Right lobe of liver (tissue), 6 donors: ENCODE measurements at regions of chr5 and their contacts with region 1.

Region 1: DNA sequence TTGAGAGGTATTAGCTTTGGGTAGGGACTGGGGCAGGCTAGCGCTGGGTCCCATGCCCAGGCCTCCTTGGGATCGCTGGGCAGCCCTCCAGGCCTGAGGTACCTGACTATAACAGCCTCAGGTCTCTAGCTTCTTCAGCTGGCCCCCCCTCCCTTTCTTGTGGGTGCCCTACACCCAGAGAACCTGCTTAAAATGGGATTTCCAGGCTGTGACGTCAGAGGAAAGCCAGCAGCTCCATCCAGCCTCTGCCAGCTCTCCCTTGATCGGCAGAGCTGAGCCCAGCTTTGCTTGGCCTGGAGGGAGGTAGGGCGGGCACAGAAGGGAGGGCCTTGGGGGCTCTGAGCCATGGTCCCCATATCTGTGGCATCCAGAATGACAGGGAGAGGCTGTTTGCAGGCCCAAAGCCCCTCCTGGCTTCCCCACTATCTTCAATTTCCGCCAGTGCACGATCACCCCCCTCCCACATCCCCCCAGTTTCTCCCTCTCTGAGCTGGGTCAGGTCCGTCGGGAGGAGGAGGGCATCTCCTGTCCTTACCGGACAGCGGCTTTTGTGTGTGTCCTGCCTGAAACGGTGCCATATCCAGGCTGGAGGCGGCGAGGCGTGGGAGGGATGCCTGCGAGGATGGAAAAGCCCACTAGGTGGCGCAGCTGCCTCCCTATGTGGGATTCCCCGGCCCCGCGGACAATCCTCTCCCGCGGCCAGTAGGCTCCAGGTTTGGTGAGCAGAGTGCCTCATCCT is 10.8 kb downstream of the REEP2 start:
- DNase-seq: peak; percentile 90 to 91 (median 90)
- ATAC-seq: peak; percentile 96 to 99 (median 99)
- H3K4me3 ChIP-seq: no peak overlapping the region
- H3K27ac ChIP-seq: no peak overlapping the region
- H3K4me1 ChIP-seq: peaks cover 0 to 6% (median 0%) of the 10 kb centered on the region in 4 donors
- H3K27me3 ChIP-seq: no peaks in the 10 kb centered on the region
- CTCF ChIP-seq: peak; percentile 94 to 97 (median 96)
- POLR2A ChIP-seq: no peak

Region 2: GRCh38 chr5:138503487-138504270 is 54.0 kb after region 1 on chr5:
- intact Hi-C with region 1: loop called in 1 of 2 experiments (anchors 5 kb)
- DNase-seq: peak in 1 of 3 donors; percentile 56
- ATAC-seq: peak; percentile 63 to 74 (median 68)
- H3K4me3 ChIP-seq: no peak overlapping the region
- H3K27ac ChIP-seq: peak overlapping the region in 1 of 3 donors; percentile 79
- H3K4me1 ChIP-seq: peaks cover 0 to 45% (median 17%) of the 10 kb centered on the region in 4 donors
- H3K27me3 ChIP-seq: no peaks in the 10 kb centered on the region
- CTCF ChIP-seq: peak; percentile 72 to 79 (median 74)
- POLR2A ChIP-seq: no peak

Region 3: GRCh38 chr5:138542956-138543729 is 93.5 kb after region 1 on chr5 and contains the start of gene ETF1:
- intact Hi-C with region 1: loop called in 1 of 2 experiments (anchors 10 kb)
- DNase-seq: peak; percentile 100
- ATAC-seq: peak; percentile 91 to 95 (median 92)
- H3K4me3 ChIP-seq: peak within 1 kb of the TSS; percentile 86 to 98 (median 97)
- H3K27ac ChIP-seq: peak within 1 kb of the TSS; percentile 94 to 99 (median 97)
- H3K4me1 ChIP-seq: peaks cover 0 to 36% (median 10%) of the 10 kb centered on the region in 4 donors
- H3K27me3 ChIP-seq: no peaks in the 10 kb centered on the region
- CTCF ChIP-seq: no peak
- POLR2A ChIP-seq: peak; percentile 100
- total RNA-seq, gene ETF1: 29.5 to 52.1 (median 39.4) TPM

Region 4: DNA sequence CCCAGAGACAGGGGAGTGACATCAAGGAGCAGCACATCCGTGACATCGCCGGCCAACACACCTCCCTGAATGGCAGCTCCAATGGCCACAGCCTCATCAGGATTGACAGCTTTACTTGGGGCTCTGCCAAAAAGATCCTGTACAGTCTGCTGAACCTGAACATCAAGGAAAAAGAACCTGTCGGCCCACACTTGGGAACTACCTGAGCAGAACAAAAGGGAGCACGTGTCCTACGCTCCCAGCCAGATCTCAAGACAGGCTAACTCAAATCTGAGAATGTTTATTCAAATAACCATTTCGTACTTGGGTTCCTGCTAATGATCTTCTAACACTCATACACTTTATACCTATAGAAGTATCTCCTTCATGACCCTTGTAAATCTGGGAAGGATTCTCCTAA is 110.3 kb after region 1 on chr5:
- intact Hi-C with region 1: loop called in 1 of 2 experiments (anchors 10 kb)
- DNase-seq: no peak
- ATAC-seq: no peak
- H3K4me3 ChIP-seq: no peak overlapping the region
- H3K27ac ChIP-seq: no peak overlapping the region
- H3K4me1 ChIP-seq: no peaks in the 10 kb centered on the region
- H3K27me3 ChIP-seq: no peaks in the 10 kb centered on the region
- CTCF ChIP-seq: no peak
- POLR2A ChIP-seq: no peak